H1 (cell line): ENCODE measurements at regions of chr11 and their contacts with region 1.

Region 1: GRCh38 chr11:20127671-20128527 is 32.4 kb downstream of the DBX1 start:
- DNase-seq: peak in 1 of 2 experiments; percentile 95
- H3K4me3 ChIP-seq: no peak overlapping the region
- H3K27ac ChIP-seq: no peak overlapping the region
- H3K4me1 ChIP-seq: peaks cover 0 to 5% (median 4%) of the 10 kb centered on the region in 4 experiments; a peak in 5 of 7 replicates
- H3K27me3 ChIP-seq: peaks cover 8 to 24% (median 17%) of the 10 kb centered on the region in 4 experiments
- CTCF ChIP-seq: peak; percentile 90 to 93 (median 92)
- EP300 ChIP-seq: no peak
- POLR2A ChIP-seq: no peak
- RAD21 ChIP-seq: peak; percentile 98

Region 2: GRCh38 chr11:19642185-19643158 is 485.4 kb before region 1 on chr11:
- CTCF ChIA-PET with region 1: no interaction called
- POLR2A ChIA-PET with region 1: no interaction called
- DNase-seq: no peak
- H3K4me3 ChIP-seq: no peak overlapping the region
- H3K27ac ChIP-seq: no peak overlapping the region
- H3K4me1 ChIP-seq: no peaks in the 10 kb centered on the region
- H3K27me3 ChIP-seq: no peaks in the 10 kb centered on the region
- CTCF ChIP-seq: no peak
- EP300 ChIP-seq: no peak
- POLR2A ChIP-seq: no peak
- RAD21 ChIP-seq: no peak

Region 3: DNA sequence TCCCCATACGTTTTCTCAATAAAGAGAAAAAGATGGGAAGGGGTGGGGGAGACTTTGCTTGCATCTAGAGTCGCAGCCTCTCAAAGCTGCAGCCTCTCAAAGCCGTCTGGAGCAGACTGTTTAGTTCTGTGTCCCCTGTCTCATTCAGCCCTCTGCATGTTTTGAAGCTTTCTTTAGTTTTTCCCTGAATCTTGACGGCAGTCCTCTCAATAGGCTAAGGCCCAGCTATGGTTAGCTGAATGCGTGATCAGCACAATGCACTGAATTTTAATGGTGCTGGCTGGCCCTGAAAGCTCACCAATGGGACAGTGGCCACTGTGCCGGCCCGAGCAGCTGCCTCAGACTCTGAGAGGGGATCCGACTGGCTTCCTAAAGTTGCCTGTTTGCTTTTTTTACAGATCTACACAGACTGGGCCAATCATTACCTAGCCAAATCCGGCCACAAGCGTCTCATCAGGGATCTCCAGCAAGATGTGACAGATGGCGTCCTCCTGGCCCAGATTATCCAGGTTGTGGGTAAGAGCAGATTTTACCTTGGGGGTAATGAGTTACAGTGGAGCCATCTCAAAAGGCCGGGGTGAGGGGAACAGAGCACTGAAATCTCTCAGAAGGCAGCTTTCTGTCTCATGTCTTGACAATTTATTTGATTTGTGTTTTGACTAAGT is 295.7 kb before region 1 on chr11:
- CTCF ChIA-PET with region 1: no interaction called
- POLR2A ChIA-PET with region 1: no interaction called
- DNase-seq: no peak
- H3K4me3 ChIP-seq: no peak overlapping the region
- H3K27ac ChIP-seq: no peak overlapping the region
- H3K4me1 ChIP-seq: peaks cover 2 to 30% (median 22%) of the 10 kb centered on the region in 4 experiments; a peak in 6 of 7 replicates
- H3K27me3 ChIP-seq: no peaks in the 10 kb centered on the region
- CTCF ChIP-seq: no peak
- EP300 ChIP-seq: no peak
- POLR2A ChIP-seq: no peak
- RAD21 ChIP-seq: no peak

Region 4: DNA sequence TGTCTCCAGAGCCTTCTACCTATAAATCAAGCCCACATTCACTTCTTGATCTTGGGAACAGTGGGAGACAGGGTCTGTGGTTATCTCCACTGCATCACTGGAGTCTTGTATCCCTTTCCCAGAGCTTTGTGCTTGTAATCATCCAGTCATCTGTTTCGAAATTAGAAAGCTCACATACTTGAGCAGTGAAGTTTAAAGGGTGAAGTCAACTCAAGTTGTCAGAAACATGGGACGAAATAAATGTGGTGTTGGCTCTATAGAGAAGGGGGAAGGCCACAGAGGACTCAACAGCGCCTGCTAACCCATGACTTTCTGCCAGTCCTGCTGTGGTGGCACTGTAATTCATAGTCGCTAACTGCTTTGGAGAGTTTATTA is 165.1 kb before region 1 on chr11:
- CTCF ChIA-PET with region 1: interaction called, 12 read pairs
- POLR2A ChIA-PET with region 1: no interaction called
- DNase-seq: no peak
- H3K4me3 ChIP-seq: no peak overlapping the region
- H3K27ac ChIP-seq: no peak overlapping the region
- H3K4me1 ChIP-seq: no peaks in the 10 kb centered on the region; a peak in 1 of 7 replicates
- H3K27me3 ChIP-seq: no peaks in the 10 kb centered on the region
- CTCF ChIP-seq: no peak
- EP300 ChIP-seq: no peak
- POLR2A ChIP-seq: no peak
- RAD21 ChIP-seq: no peak

Region 5: GRCh38 chr11:20117291-20117690 is 10.6 kb before region 1 on chr11:
- CTCF ChIA-PET with region 1: interaction called, 22 read pairs
- POLR2A ChIA-PET with region 1: no interaction called
- DNase-seq: no peak
- H3K4me3 ChIP-seq: no peak overlapping the region
- H3K27ac ChIP-seq: no peak overlapping the region
- H3K4me1 ChIP-seq: no peaks in the 10 kb centered on the region
- H3K27me3 ChIP-seq: no peaks in the 10 kb centered on the region
- CTCF ChIP-seq: no peak
- EP300 ChIP-seq: no peak
- POLR2A ChIP-seq: no peak
- RAD21 ChIP-seq: no peak

Region 6: DNA sequence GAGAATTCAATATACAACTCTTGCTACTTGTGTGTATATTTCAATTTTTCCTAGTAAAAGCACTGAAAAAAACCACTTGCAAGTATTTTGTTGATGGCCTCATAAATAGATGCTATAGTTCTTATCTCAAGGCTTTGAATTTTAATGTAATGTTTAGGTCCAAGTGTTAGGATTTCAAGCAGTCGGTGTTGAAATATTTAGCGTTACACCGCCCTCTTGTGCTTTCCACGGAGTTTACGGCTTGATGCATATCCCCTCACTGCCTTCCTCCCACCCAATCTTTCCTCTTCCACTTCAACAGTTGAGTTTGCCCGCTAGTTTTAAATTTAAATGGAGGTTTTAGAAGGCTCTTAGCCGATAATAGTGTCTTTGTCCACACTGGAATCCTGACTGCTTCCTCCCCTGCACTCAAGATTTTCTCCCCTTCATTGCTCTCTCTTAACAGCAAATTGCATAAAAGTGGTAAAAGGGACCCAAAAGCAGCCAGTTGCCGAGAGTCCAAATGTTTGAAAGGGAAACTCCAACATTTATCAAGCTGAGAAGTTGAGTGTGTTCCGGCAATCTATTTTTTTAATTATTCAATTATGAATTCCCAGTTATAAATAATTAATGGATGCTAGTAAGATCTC is 209.7 kb after region 1 on chr11:
- CTCF ChIA-PET with region 1: interaction called, 46 read pairs
- POLR2A ChIA-PET with region 1: no interaction called
- DNase-seq: peak in 1 of 2 experiments; percentile 55
- H3K4me3 ChIP-seq: no peak overlapping the region
- H3K27ac ChIP-seq: no peak overlapping the region
- H3K4me1 ChIP-seq: peaks cover 0 to 4% (median 3%) of the 10 kb centered on the region in 4 experiments; a peak in 6 of 7 replicates
- H3K27me3 ChIP-seq: peaks cover 0 to 1% (median 0%) of the 10 kb centered on the region in 4 experiments; a peak in 2 of 7 replicates
- CTCF ChIP-seq: peak; percentile 51 to 73 (median 61)
- EP300 ChIP-seq: no peak
- POLR2A ChIP-seq: no peak
- RAD21 ChIP-seq: peak; percentile 84 to 87

Region 7: GRCh38 chr11:20566591-20567434 is 438.9 kb after region 1 on chr11:
- CTCF ChIA-PET with region 1: no interaction called
- POLR2A ChIA-PET with region 1: no interaction called
- DNase-seq: no peak
- H3K4me3 ChIP-seq: no peak overlapping the region
- H3K27ac ChIP-seq: no peak overlapping the region
- H3K4me1 ChIP-seq: no peaks in the 10 kb centered on the region
- H3K27me3 ChIP-seq: no peaks in the 10 kb centered on the region
- CTCF ChIP-seq: no peak
- EP300 ChIP-seq: no peak
- POLR2A ChIP-seq: no peak
- RAD21 ChIP-seq: no peak

Region 8: DNA sequence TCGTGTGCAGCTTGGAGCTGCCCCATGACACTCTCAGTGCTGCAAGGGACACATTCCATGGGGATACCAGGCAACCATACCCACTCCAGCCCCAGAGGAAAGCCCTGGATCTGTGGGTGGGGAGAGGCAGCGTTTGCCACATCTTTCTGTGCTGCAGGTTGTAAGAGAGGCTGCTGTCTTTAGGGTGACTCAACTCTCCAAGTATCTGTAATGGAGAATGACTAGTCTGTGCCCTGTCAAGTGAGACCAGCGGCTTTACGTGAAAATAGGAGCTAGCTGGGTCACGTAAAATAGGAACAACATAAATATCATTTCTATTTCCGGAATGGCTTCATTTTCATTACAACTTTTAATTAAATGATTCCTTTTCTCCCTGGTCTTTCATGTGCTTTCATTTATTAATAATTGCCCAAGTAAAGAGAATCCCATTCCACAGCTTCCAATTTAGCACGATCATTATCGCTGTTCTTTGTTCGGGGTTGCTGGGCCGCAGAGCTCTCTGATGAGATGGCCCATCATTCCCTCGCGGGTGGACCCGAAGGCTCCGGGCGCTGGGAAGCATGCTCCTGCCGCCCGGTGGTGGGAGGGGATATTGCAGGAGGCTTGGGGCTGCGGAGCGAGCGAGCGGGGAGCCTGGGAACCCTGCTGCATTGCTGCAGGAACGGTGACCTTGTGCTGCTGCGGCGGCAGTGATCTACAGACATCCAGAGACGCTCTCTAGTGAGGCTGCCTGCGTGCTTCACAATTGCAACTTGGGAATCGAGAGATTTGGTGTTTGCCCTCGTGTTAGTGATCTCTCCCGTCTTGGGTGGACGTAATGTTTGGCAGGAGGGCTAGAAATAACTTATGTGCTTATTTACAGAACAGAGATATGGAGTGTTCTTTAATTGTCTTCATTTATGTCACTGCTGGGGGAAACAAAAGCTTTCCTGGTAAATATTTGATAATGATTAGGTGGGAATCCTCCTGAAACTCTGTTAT is 482.1 kb after region 1 on chr11:
- CTCF ChIA-PET with region 1: interaction called, 14 read pairs
- POLR2A ChIA-PET with region 1: no interaction called
- DNase-seq: peak; percentile 68 to 98
- H3K4me3 ChIP-seq: no peak overlapping the region
- H3K27ac ChIP-seq: no peak overlapping the region
- H3K4me1 ChIP-seq: no peaks in the 10 kb centered on the region; a peak in 2 of 7 replicates
- H3K27me3 ChIP-seq: peaks cover 0 to 4% (median 2%) of the 10 kb centered on the region in 4 experiments; a peak in 3 of 7 replicates
- CTCF ChIP-seq: peak; percentile 89 to 97 (median 95)
- EP300 ChIP-seq: no peak
- POLR2A ChIP-seq: no peak
- RAD21 ChIP-seq: peak; percentile 98 to 100